Motor neuron (in vitro differentiated cells): ENCODE measurements at regions of chr6 and their contacts with region 1.

Region 1: GRCh38 chr6:82260997-82261686 is 13.6 kb upstream of the IBTK start:
- ATAC-seq: no peak
- H3K4me3 ChIP-seq: no peak overlapping the region
- H3K27ac ChIP-seq: no peak overlapping the region
- H3K4me1 ChIP-seq: peaks cover 0 to 2% of the 10 kb centered on the region in 2 donors

Region 2: GRCh38 chr6:83057705-83058321 is 796.7 kb after region 1 on chr6:
- in situ Hi-C with region 1: loop called in 6 of 9 experiments (anchors 10 to 25 kb)
- ATAC-seq: peak; percentile 63 to 95 (median 82)
- H3K4me3 ChIP-seq: no peak overlapping the region
- H3K27ac ChIP-seq: no peak overlapping the region
- H3K4me1 ChIP-seq: no peaks in the 10 kb centered on the region